Activated B cell treated with CpG ODN at 0.5 μM for 24 hours (primary cell): ENCODE measurements at regions of chr4 and their contacts with region 1.

Region 1: DNA sequence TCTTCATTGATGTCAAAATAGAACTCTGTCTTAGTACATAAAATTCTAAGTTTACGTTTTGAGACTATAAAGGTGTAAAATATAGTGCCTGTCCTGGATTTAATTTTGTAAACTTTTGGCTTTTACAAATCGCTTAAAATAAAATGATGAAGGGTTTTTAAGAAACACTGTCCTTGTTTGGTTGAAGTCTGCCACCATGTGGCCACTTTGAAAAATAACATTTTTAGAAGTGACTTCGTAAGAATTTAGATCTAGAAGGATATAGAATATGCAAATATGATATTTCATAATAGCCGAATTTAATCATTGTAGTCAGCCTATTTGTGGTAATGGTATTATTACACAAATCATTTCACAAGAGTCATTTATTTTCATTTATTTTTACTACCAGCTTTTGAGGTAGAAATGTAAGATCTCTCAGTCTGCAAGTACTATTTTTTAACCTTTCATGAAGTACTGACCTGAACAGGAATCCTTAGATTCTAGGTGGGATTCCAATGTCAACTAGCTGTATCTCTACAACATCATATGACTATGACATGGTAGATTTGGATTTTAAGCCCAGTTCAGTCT is 31.0 kb upstream of the FAT4 start:
- DNase-seq: no peak
- ATAC-seq: no peak
- H3K4me3 Mint-ChIP-seq: no peak overlapping the region
- H3K27ac Mint-ChIP-seq: no peak overlapping the region
- H3K4me1 Mint-ChIP-seq: no peaks in the 10 kb centered on the region
- H3K27me3 Mint-ChIP-seq: no peaks in the 10 kb centered on the region
- CTCF ChIP-seq: no peak

Region 2: GRCh38 chr4:123770884-123771283 is 1512.9 kb before region 1 on chr4:
- CTCF ChIA-PET with region 1: interaction called, 4 read pairs
- POLR2A ChIA-PET with region 1: no interaction called
- intact Hi-C with region 1: loop called (anchors 5 kb)
- DNase-seq: no peak
- ATAC-seq: no peak
- H3K4me3 Mint-ChIP-seq: no peak overlapping the region
- H3K27ac Mint-ChIP-seq: no peak overlapping the region
- H3K4me1 Mint-ChIP-seq: peaks cover under 1% of the 10 kb centered on the region
- H3K27me3 Mint-ChIP-seq: peaks cover 6% of the 10 kb centered on the region
- CTCF ChIP-seq: no peak

Region 3: GRCh38 chr4:124334119-124334518 is 949.7 kb before region 1 on chr4:
- CTCF ChIA-PET with region 1: interaction called, 20 read pairs
- POLR2A ChIA-PET with region 1: no interaction called
- intact Hi-C with region 1: no loop called
- DNase-seq: no peak
- ATAC-seq: no peak
- H3K4me3 Mint-ChIP-seq: no peak overlapping the region
- H3K27ac Mint-ChIP-seq: no peak overlapping the region
- H3K4me1 Mint-ChIP-seq: no peaks in the 10 kb centered on the region
- H3K27me3 Mint-ChIP-seq: no peaks in the 10 kb centered on the region
- CTCF ChIP-seq: no peak

Region 4: GRCh38 chr4:126451237-126451873 is 1167.6 kb after region 1 on chr4:
- CTCF ChIA-PET with region 1: no interaction called
- POLR2A ChIA-PET with region 1: no interaction called
- intact Hi-C with region 1: no loop called
- DNase-seq: no peak
- ATAC-seq: no peak
- H3K4me3 Mint-ChIP-seq: no peak overlapping the region
- H3K27ac Mint-ChIP-seq: no peak overlapping the region
- H3K4me1 Mint-ChIP-seq: no peaks in the 10 kb centered on the region
- H3K27me3 Mint-ChIP-seq: no peaks in the 10 kb centered on the region
- CTCF ChIP-seq: no peak